ENCODE measurements at regions of chr17 and their contacts with region 1.

Region 1: GRCh38 chr17:48016112-48016511 is 21.5 kb downstream of the COPZ2 start:
- DNase-seq: no peak
- H3K4me3 ChIP-seq: no peak overlapping the region
- H3K27ac ChIP-seq: no peak overlapping the region
- H3K4me1 ChIP-seq: peaks cover 12% of the 10 kb centered on the region
- H3K27me3 ChIP-seq: no peaks in the 10 kb centered on the region
- CTCF ChIP-seq: no peak
- POLR2A ChIP-seq: no peak

Region 2: GRCh38 chr17:47978324-47978723 is 37.8 kb before region 1 on chr17:
- intact Hi-C with region 1: loop called (anchors 5 kb)
- DNase-seq: no peak
- H3K4me3 ChIP-seq: no peak overlapping the region
- H3K27ac ChIP-seq: no peak overlapping the region
- H3K4me1 ChIP-seq: no peaks in the 10 kb centered on the region
- H3K27me3 ChIP-seq: no peaks in the 10 kb centered on the region
- CTCF ChIP-seq: peak in 2 of 3 experiments; percentile 58 to 64
- POLR2A ChIP-seq: no peak